ENCODE measurements at regions of chr19 and their contacts with region 1.

Region 1: GRCh38 chr19:57279418-57280066 is 743 bp upstream of the ZNF460 start:
- DNase-seq: peak; percentile 89
- ATAC-seq: peak; percentile 68
- H3K4me3 Mint-ChIP-seq: no peak overlapping the region
- H3K27ac Mint-ChIP-seq: no peak overlapping the region
- H3K4me1 Mint-ChIP-seq: peaks cover 30% of the 10 kb centered on the region
- H3K27me3 Mint-ChIP-seq: no peaks in the 10 kb centered on the region
- CTCF ChIP-seq: no peak

Region 2: GRCh38 chr19:57192077-57192420 is 87.5 kb before region 1 on chr19:
- CTCF ChIA-PET with region 1: no interaction called
- POLR2A ChIA-PET with region 1: no interaction called
- intact Hi-C with region 1: no loop called
- DNase-seq: peak; percentile 18
- ATAC-seq: no peak
- H3K4me3 Mint-ChIP-seq: peak overlapping the region; percentile 94
- H3K27ac Mint-ChIP-seq: peak overlapping the region; percentile 91
- H3K4me1 Mint-ChIP-seq: peaks cover 29% of the 10 kb centered on the region
- H3K27me3 Mint-ChIP-seq: peaks cover 5% of the 10 kb centered on the region
- CTCF ChIP-seq: no peak

Region 3: DNA sequence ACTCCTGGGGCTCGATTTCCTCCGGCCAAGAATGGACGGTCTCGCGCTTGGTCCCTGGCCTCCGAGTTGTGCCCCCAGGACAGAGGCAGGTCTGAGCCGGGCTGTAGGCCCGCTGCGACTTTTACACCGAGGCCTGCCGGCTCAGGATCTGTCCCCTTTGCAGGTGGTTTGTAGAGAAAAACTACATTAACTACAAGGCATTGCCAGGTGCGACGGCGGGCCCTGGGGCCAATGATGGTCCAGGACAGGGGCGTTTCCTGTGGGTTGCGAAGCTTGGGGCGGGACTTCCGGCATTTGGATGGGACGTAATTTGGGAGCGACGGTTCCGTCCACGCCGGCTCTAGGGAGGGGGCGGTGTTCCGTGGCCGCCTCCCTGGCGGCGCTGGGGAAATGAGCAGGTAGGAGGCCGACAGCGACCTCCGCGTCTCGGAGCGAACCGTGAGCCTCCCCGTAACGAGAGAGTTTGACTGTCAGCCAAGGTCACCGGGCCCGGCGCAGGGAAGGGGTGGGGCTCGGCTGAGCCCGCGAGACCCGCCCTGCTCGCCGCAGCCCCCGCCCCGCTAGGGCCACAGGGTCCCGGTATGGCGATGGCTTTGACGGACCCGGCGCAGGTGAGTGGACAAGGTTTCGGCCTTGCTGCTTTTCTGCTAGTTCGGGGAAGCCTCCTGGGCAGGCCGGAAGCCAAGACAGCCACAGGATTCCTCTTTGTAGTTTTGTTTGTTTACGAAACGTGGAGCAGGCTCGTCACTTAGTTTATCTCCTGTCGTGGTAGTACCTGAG is 39.0 kb before region 1 on chr19 and contains the start of gene ZNF805:
- CTCF ChIA-PET with region 1: no interaction called
- POLR2A ChIA-PET with region 1: interaction called, 4 read pairs
- intact Hi-C with region 1: loop called (anchors 1 kb)
- DNase-seq: peak; percentile 97
- ATAC-seq: peak; percentile 95
- H3K4me3 Mint-ChIP-seq: peak within 1 kb of the TSS; percentile 82
- H3K27ac Mint-ChIP-seq: peak within 1 kb of the TSS; percentile 90
- H3K4me1 Mint-ChIP-seq: peaks cover 36% of the 10 kb centered on the region
- H3K27me3 Mint-ChIP-seq: no peaks in the 10 kb centered on the region
- CTCF ChIP-seq: no peak
- total RNA-seq, gene ZNF805: 7.6 to 7.8 TPM

Region 4: DNA sequence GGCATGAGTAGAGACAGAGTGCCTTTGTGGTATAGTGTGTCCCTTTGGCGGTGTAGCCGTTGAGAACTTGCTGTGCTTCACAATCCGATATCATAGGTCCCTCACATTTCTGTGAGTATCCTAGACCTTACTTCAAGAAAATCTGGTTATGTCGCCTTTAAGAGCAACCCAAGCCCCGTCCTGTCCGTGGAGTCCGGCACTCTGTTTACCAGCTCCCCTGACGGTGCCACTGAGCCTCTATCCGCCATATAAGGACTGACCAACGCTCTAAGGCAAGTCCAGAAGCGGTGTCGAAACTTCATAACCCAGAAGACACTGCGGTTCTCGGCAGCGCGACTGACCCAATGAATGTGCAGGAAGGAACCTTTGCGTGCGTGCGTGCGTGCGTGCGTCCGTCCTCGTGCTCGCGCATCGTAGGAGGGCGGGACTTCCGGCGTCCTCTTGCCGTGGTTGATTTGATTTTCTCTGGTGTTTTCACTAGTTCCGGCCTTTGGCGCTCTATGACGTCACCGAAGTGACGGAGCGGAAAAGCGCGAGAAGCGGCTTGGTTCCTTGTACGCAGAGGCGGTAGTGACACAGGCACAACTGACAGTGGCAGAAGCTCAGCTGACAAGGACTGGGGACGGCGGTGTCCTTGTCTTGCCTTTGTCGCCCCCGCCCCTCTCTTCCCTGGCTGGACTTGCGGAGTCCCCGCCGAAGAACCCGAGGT is 83.6 kb after region 1 on chr19 and contains the starts of genes TRAPPC2B and ZNF547:
- CTCF ChIA-PET with region 1: no interaction called
- POLR2A ChIA-PET with region 1: no interaction called
- intact Hi-C with region 1: loop called (anchors 10 kb)
- DNase-seq: peak; percentile 99
- ATAC-seq: peak; percentile 95
- H3K4me3 Mint-ChIP-seq: peak within 1 kb of the TSS; percentile 86
- H3K27ac Mint-ChIP-seq: peak within 1 kb of the TSS; percentile 97
- H3K4me1 Mint-ChIP-seq: peaks cover 14% of the 10 kb centered on the region
- H3K27me3 Mint-ChIP-seq: no peaks in the 10 kb centered on the region
- CTCF ChIP-seq: no peak
- total RNA-seq, gene TRAPPC2B: 6.0 to 7.4 TPM
- total RNA-seq, gene ZNF547: 1.3 to 1.5 TPM

Region 5: GRCh38 chr19:57376151-57376550 is 96.6 kb after region 1 on chr19:
- CTCF ChIA-PET with region 1: no interaction called
- POLR2A ChIA-PET with region 1: no interaction called
- intact Hi-C with region 1: no loop called
- DNase-seq: no peak
- ATAC-seq: no peak
- H3K4me3 Mint-ChIP-seq: no peak overlapping the region
- H3K27ac Mint-ChIP-seq: no peak overlapping the region
- H3K4me1 Mint-ChIP-seq: no peaks in the 10 kb centered on the region
- H3K27me3 Mint-ChIP-seq: no peaks in the 10 kb centered on the region
- CTCF ChIP-seq: no peak

Measured in activated CD8-positive, alpha-beta T cell treated with anti-CD3 and anti-CD28 coated beads for 36 hours (primary cell).